HAP-1 (cell line): ENCODE measurements at regions of chr4 and their contacts with region 1.

Region 1: GRCh38 chr4:101724093-101724492 is 66.4 kb upstream of the BANK1 start:
- DNase-seq: no peak
- H3K4me3 ChIP-seq: no peak overlapping the region
- H3K4me1 ChIP-seq: no peaks in the 10 kb centered on the region
- H3K27me3 ChIP-seq: no peaks in the 10 kb centered on the region

Region 2: DNA sequence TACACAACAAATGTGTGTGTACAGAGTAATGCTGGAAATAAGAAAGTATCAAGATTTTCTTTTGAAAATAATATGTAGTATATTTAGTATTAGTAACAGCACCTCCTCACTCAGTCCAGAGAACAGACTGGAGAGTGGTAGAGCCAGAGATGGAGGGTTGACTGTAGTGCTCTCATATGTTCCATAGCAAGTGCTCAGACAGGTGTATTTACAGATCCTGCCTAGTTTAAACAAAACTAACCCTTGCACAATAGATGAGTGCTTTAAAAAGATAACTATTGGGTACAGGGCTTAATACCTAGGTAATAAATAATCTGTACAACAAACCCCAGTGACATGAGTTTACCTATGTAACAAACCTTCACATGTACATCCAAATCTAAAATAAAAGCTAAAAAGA is 825.2 kb before region 1 on chr4:
- in situ Hi-C with region 1: no loop called
- DNase-seq: no peak
- H3K4me3 ChIP-seq: no peak overlapping the region
- H3K4me1 ChIP-seq: no peaks in the 10 kb centered on the region
- H3K27me3 ChIP-seq: no peaks in the 10 kb centered on the region

Region 3: DNA sequence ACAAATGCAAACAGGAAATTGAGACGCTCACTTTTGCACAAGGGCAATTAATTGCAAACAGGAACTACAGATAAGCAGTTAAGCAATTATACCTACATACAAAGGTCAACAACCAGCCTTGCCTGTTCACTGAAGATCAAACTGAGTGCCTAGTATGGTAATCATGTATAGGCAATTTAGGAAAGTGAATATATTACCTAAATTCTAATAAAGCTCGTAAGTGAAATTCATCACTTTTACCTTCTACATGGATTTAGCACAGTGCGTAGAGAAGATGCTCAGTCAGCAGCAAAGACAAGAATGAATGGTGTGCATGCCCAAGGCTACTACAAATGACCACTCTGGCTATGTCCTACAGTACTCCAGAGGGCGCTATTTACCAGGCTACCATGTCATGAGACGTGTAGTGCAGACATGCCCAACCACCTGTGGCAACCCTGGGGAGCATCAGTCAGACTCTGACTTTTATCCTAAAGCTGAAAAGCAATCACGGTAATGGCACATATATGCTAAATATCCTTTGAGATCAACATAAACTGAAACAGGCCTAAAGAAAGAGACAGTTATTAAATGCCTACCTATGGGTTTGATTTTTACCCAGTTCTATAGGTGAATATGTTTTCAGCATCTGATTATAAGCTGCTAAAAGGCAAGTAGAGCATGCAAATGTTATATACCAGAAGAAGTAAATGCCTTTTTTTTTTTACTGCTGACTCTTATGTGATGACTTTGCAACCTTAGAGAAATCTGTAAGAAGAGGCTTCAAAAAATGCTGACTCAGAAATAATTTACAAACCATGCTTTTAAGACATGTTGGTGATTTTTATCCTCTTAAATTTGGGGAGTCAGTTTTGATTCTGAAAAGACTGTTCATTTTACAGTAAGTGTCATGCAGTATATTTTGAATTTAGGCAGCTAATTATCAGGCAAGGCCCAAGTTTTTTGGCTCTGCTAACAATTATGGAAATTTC is 554.8 kb before region 1 on chr4:
- in situ Hi-C with region 1: loop called (anchors 25 kb)
- DNase-seq: peak; percentile 76 to 84
- H3K4me3 ChIP-seq: no peak overlapping the region
- H3K4me1 ChIP-seq: peaks cover 45% of the 10 kb centered on the region
- H3K27me3 ChIP-seq: no peaks in the 10 kb centered on the region

Region 4: GRCh38 chr4:101347557-101348366 is 376.3 kb before region 1 on chr4:
- in situ Hi-C with region 1: loop called (anchors 25 kb)
- DNase-seq: peak; percentile 93 to 99
- H3K4me3 ChIP-seq: peak overlapping the region; percentile 78
- H3K4me1 ChIP-seq: peaks cover 3% of the 10 kb centered on the region
- H3K27me3 ChIP-seq: no peaks in the 10 kb centered on the region